Panc1 (cell line): ENCODE measurements at regions of chr16 and their contacts with region 1.

Region 1: GRCh38 chr16:57388359-57389086 is 16.0 kb upstream of the CCL17 start:
- DNase-seq: no peak
- ATAC-seq: no peak
- H3K4me3 ChIP-seq: no peak overlapping the region
- H3K27ac ChIP-seq: no peak overlapping the region
- H3K4me1 ChIP-seq: no peaks in the 10 kb centered on the region
- H3K27me3 ChIP-seq: no peaks in the 10 kb centered on the region
- CTCF ChIP-seq: no peak

Region 2: GRCh38 chr16:57366544-57367040 is 21.9 kb before region 1 on chr16:
- CTCF ChIA-PET with region 1: interaction called, 13 read pairs
- POLR2A ChIA-PET with region 1: no interaction called
- in situ Hi-C with region 1: no loop called
- intact Hi-C with region 1: no loop called
- DNase-seq: no peak
- ATAC-seq: no peak
- H3K4me3 ChIP-seq: no peak overlapping the region
- H3K27ac ChIP-seq: no peak overlapping the region
- H3K4me1 ChIP-seq: no peaks in the 10 kb centered on the region
- H3K27me3 ChIP-seq: no peaks in the 10 kb centered on the region
- CTCF ChIP-seq: no peak

Region 3: GRCh38 chr16:57447186-57447962 is 58.9 kb after region 1 on chr16 and contains the starts of genes CIAPIN1 and COQ9:
- CTCF ChIA-PET with region 1: no interaction called
- POLR2A ChIA-PET with region 1: interaction called, 17 read pairs
- in situ Hi-C with region 1: no loop called
- intact Hi-C with region 1: no loop called
- DNase-seq: peak; percentile 39
- ATAC-seq: peak; percentile 100
- H3K4me3 ChIP-seq: peak within 1 kb of the TSS; percentile 85 to 97
- H3K27ac ChIP-seq: peak within 1 kb of the TSS; percentile 94
- H3K4me1 ChIP-seq: no peaks in the 10 kb centered on the region; the same call in 1 of the 2 replicates
- H3K27me3 ChIP-seq: no peaks in the 10 kb centered on the region
- CTCF ChIP-seq: no peak
- total RNA-seq, gene CIAPIN1: 64.0 TPM
- total RNA-seq, gene COQ9: 48.5 TPM